ENCODE measurements at regions of chr12 and their contacts with region 1.

Region 1: DNA sequence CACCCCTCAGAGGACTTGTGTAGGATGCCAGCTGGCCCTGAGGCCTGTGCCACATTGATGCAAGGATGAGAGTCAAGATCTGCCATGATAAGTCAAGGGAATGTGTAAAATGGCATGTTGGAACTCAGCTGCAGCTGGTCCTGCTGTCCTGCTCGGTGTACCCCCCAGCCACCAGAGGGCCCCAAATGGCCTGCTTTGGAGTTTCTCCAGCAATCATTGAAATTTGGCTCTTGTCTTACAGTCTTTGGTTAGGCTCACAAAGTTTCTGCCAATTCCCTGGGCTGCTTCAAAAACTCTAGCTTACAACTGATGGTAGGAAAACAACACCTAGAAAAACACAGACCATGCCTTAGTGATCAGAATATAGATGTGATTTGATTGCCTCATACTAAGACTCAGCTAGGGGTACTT is 76.8 kb downstream of the HSD17B6 start:
- DNase-seq: peak; percentile 71
- H3K4me3 Mint-ChIP-seq: no peak overlapping the region
- H3K27ac Mint-ChIP-seq: no peak overlapping the region
- H3K4me1 Mint-ChIP-seq: peaks cover 9% of the 10 kb centered on the region
- H3K27me3 Mint-ChIP-seq: peaks cover 8% of the 10 kb centered on the region

Region 2: DNA sequence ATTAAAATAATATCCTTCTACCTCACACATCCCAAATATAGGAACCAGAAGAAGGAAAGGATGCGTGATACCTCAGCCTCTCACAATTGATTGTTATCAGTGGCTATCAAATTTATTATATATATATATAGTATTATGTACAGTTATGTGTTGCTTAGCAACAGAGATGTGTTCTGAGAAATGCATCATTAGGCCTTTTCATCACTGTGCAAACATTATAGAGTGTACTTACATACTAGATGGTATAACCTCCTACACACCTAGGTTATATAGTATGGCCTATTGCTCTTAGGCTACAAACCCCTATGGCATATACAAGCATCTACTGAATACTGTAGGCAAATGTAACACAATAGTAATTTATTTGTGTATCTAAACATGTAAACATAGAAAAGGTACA is 946.2 kb before region 1 on chr12:
- intact Hi-C with region 1: loop called (anchors 5 kb)
- DNase-seq: no peak
- H3K4me3 Mint-ChIP-seq: no peak overlapping the region
- H3K27ac Mint-ChIP-seq: no peak overlapping the region
- H3K4me1 Mint-ChIP-seq: peaks cover under 1% of the 10 kb centered on the region
- H3K27me3 Mint-ChIP-seq: no peaks in the 10 kb centered on the region

Region 3: GRCh38 chr12:56987551-56988053 is 147.7 kb after region 1 on chr12:
- intact Hi-C with region 1: loop called (anchors 1 kb)
- DNase-seq: peak; percentile 92
- H3K4me3 Mint-ChIP-seq: peak overlapping the region; percentile 24
- H3K27ac Mint-ChIP-seq: no peak overlapping the region
- H3K4me1 Mint-ChIP-seq: peaks cover 24% of the 10 kb centered on the region
- H3K27me3 Mint-ChIP-seq: peaks cover 8% of the 10 kb centered on the region

Measured in activated CD4-positive, alpha-beta T cell treated with anti-CD3 and anti-CD28 coated beads, Interleukin-2, amount 10 ng/mL, durations not matched to agents 24 days and 14 days (primary cell).